Head of caudate nucleus (tissue), 42 donors: ENCODE measurements at regions of chr15 and their contacts with region 1.

Region 1: GRCh38 chr15:40421246-40422157 is 15.9 kb downstream of the IVD start:
- DNase-seq: peak; percentile 67 to 93 (median 85)

Region 2: GRCh38 chr15:40274350-40275274 is 146.9 kb before region 1 on chr15:
- intact Hi-C with region 1: loop called (anchors 5 kb)
- DNase-seq: peak; percentile 61 to 93 (median 85)

Region 3: GRCh38 chr15:40344631-40345120 is 76.8 kb before region 1 on chr15:
- intact Hi-C with region 1: loop called (anchors 5 kb)
- DNase-seq: peak; percentile 61 to 88 (median 78)